ENCODE measurements at regions of chr11 and their contacts with region 1.

Region 1: GRCh38 chr11:71448257-71449171 is at the start of gene DHCR7:
- DNase-seq: peak; percentile 92
- H3K4me3 ChIP-seq: peak within 1 kb of the TSS; percentile 51 to 97 (median 82)
- H3K27ac ChIP-seq: peak within 1 kb of the TSS; percentile 26
- H3K4me1 ChIP-seq: peaks cover 29% of the 10 kb centered on the region
- H3K27me3 ChIP-seq: no peaks in the 10 kb centered on the region
- CTCF ChIP-seq: no peak
- total RNA-seq, gene DHCR7: 62.8 to 231 TPM

Region 2: GRCh38 chr11:71286701-71287643 is 161.5 kb before region 1 on chr11:
- CTCF ChIA-PET with region 1: interaction called, 31 read pairs
- dilution Hi-C with region 1: no loop called
- in situ Hi-C with region 1: no loop called
- intact Hi-C with region 1: no loop called
- DNase-seq: peak; percentile 95
- H3K4me3 ChIP-seq: peak overlapping the region in 2 of 3 experiments; percentile 1 to 11
- H3K27ac ChIP-seq: peak overlapping the region; percentile 52
- H3K4me1 ChIP-seq: peaks cover 48% of the 10 kb centered on the region
- H3K27me3 ChIP-seq: no peaks in the 10 kb centered on the region
- CTCF ChIP-seq: no peak

Region 3: DNA sequence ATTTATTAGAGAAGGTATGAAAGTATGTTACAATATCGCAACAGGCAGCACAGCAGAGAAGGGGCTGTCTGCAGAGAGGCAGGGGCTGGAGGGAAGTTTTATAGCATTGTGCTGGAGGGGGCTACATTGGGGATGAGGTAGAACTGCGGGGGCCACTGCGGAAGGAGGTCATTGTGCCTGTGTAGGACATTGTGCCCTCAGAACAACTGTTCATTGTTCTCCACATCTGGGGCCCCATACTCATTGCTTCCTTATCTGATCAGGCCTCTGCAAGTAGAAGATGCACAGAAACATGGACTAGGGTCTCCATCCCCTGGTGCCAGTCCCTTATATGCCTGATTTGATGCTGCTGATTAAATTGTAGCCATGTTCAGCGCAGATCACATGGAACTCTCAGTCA is 16.5 kb after region 1 on chr11:
- CTCF ChIA-PET with region 1: no interaction called
- dilution Hi-C with region 1: no loop called
- in situ Hi-C with region 1: no loop called
- intact Hi-C with region 1: loop called (anchors 2 kb)
- DNase-seq: no peak
- H3K4me3 ChIP-seq: no peak overlapping the region
- H3K27ac ChIP-seq: no peak overlapping the region
- H3K4me1 ChIP-seq: no peaks in the 10 kb centered on the region
- H3K27me3 ChIP-seq: no peaks in the 10 kb centered on the region
- CTCF ChIP-seq: no peak

Region 4: GRCh38 chr11:71500601-71501021 is 52.1 kb after region 1 on chr11:
- CTCF ChIA-PET with region 1: interaction called, 9 read pairs
- dilution Hi-C with region 1: loop called (anchors 5 kb)
- in situ Hi-C with region 1: no loop called
- intact Hi-C with region 1: no loop called
- DNase-seq: no peak
- H3K4me3 ChIP-seq: no peak overlapping the region
- H3K27ac ChIP-seq: no peak overlapping the region
- H3K4me1 ChIP-seq: no peaks in the 10 kb centered on the region
- H3K27me3 ChIP-seq: no peaks in the 10 kb centered on the region
- CTCF ChIP-seq: no peak

Measured in mammary epithelial cell (primary cell).